ENCODE measurements at regions of chr6 and their contacts with region 1.

Region 1: DNA sequence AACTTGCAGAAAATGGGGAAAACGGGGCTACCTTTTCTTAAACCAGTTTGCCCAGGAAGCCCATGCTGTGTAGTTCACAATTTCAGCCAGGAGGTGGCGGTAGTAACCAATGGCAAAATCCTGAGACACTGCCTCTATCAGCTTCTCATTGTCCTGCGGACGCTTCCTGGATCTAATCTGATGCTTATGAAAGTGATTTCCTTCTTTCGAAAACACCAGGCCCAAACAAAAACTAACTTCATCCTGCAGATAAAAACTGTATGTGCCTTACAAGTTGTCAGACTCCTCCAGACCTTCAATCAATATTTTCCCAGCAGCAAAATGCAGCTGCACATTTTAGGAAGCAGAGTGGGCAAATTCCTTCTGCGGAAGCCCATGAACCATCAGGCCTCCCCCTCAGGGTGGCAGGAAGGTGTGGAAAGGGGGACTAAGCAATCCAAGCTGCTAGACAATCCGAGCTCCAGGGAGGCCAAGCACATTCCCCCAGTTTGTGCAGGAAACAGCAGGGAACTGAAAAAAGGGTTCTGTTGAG is 88.5 kb downstream of the LY86 start:
- DNase-seq: peak; percentile 91
- H3K4me3 ChIP-seq: no peak overlapping the region
- H3K27ac ChIP-seq: peak overlapping the region; percentile 55
- H3K4me1 ChIP-seq: peaks cover 30% of the 10 kb centered on the region
- H3K27me3 ChIP-seq: no peaks in the 10 kb centered on the region
- CTCF ChIP-seq: peak; percentile 99

Region 2: DNA sequence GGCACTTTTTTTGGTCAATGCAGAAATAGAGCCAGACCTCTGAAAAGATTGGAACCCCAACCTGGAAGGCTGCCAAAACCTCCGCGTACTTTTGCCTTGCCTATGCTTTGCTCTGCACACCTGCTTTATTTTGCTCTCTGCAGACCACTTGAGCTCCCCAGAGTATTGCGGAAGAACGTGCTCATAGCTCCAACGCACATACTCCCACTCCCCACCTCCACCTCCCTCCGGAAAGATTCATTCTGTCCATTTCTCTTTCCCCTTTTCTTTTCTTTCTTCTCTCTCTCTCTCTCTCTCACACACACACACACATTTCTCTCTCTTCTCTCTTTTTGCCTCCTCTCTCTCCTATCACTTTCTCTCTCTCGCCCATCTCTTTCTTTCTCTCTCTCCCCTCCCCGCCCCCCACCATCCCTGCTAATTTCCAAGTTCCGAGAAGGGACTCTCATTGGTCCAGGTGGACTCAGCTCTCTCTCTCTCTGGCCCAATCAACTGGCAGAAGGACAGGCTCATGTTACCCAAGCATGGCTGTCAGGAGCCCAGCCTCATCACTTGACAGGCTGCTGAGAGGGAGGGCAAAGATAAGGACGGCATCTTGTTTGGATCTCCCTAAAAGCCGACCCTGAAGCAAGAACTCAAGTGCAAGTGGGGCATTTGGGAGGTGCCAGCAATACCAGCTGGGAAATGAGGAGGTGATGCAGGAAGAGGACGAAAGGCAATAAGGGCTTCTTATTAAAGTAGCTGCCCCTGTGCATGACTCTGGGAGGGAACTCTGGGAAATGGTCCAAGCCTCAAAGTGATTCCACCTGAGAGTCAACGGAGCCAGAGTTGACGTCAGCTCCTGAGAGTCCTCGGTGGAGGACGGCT is 157.6 kb after region 1 on chr6:
- CTCF ChIA-PET with region 1: interaction called, 4 read pairs
- POLR2A ChIA-PET with region 1: no interaction called
- intact Hi-C with region 1: loop called (anchors 5 kb)
- DNase-seq: no peak
- H3K4me3 ChIP-seq: no peak overlapping the region
- H3K27ac ChIP-seq: peak overlapping the region; percentile 93
- H3K4me1 ChIP-seq: peaks cover 45% of the 10 kb centered on the region
- H3K27me3 ChIP-seq: no peaks in the 10 kb centered on the region
- CTCF ChIP-seq: no peak

Measured in A673 (cell line).